ENCODE measurements at regions of chr2 and their contacts with region 1.

Region 1: DNA sequence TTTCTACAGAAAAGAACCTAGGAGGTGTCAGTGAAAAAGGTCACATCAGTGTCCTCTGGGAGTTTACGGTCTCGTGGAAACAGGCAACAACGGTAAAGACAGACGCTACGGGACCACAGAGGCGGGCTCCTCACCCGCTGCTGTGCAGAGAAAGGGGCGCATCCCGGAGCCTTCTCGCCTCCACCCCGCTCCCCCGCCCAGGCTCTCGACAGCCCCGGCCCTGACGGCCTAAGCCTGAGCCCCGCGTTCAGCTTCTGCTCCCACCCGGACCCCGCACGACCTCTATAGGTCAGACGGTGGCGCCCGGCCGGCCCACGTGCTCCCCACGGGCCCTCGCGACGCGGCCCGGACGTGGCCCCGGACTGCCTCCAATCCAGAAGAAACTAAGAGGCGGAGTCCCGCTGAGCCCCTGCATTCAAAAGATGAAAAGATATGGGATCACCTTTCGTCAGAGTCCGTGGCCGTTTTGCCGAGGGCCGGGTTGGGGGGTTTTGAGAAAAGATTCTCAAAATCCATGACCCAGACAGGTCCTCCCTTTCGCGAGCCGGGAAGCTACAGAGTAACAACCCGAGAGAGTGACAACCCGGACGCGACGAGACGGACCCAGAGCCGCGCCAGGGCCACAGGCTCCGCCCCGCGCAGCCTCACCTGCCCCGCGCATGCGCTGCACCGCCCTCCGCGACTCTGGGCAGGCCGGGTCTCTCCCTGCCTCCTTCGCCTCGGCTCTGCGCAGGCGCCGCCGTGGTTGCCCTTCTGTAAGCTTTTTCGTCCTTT is at the start of gene ZC3H8:
- DNase-seq: peak; percentile 95 to 97
- H3K4me3 ChIP-seq: peak within 1 kb of the TSS; percentile 40 to 67 (median 63)
- H3K27ac ChIP-seq: peak within 1 kb of the TSS; percentile 69 to 73 (median 71)
- H3K4me1 ChIP-seq: peaks cover 4 to 9% of the 10 kb centered on the region in 2 donors
- H3K27me3 ChIP-seq: no peaks in the 10 kb centered on the region
- CTCF ChIP-seq: no peak
- POLR2A ChIP-seq: peak in 1 of 2 donors; percentile 93
- total RNA-seq, gene ZC3H8: 26.9 to 68.1 (median 43.1) TPM

Region 2: GRCh38 chr2:111958901-111959300 is 295.8 kb before region 1 on chr2:
- intact Hi-C with region 1: no loop called
- DNase-seq: no peak
- H3K4me3 ChIP-seq: no peak overlapping the region
- H3K27ac ChIP-seq: peak overlapping the region in 1 of 3 donors; percentile 2
- H3K4me1 ChIP-seq: peaks cover 9 to 13% of the 10 kb centered on the region in 2 donors
- H3K27me3 ChIP-seq: no peaks in the 10 kb centered on the region
- CTCF ChIP-seq: peak in 1 of 6 experiments; percentile 11
- POLR2A ChIP-seq: no peak

Region 3: DNA sequence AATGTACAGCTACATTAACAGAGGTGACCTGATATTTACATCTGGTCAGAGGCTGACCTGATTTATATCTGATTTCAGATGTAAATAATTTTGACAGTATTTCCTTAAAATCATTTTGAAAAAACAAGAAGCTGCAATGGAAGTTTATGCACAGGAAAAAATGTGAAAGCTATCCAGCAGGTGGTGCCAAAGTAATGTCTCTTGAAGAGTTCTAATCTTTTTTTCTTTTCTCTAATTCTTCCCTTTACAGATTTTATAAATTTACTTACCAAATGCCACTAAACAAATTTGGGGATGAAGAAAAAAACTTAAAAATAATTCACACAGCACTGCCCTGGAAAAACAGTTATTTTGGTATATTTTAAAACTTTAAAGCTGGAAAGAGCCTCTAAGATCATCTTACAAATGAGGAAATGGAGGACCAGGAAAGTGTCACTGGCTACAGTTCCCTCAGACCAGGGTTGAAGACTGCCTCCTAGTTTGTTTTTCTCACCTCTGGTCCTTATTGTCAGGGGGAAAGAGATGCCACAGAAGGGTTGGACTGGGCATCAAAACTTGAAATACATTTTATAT is 132.9 kb before region 1 on chr2:
- intact Hi-C with region 1: loop called (anchors 5 kb)
- DNase-seq: peak; percentile 42 to 49
- H3K4me3 ChIP-seq: no peak overlapping the region
- H3K27ac ChIP-seq: no peak overlapping the region
- H3K4me1 ChIP-seq: no peaks in the 10 kb centered on the region
- H3K27me3 ChIP-seq: no peaks in the 10 kb centered on the region
- CTCF ChIP-seq: peak; percentile 20 to 75 (median 67)
- POLR2A ChIP-seq: no peak

Region 4: GRCh38 chr2:112204411-112204810 is 50.2 kb before region 1 on chr2:
- intact Hi-C with region 1: no loop called
- DNase-seq: no peak
- H3K4me3 ChIP-seq: no peak overlapping the region
- H3K27ac ChIP-seq: no peak overlapping the region
- H3K4me1 ChIP-seq: no peaks in the 10 kb centered on the region
- H3K27me3 ChIP-seq: no peaks in the 10 kb centered on the region
- CTCF ChIP-seq: no peak
- POLR2A ChIP-seq: no peak